ENCODE measurements at regions of chr9 and their contacts with region 1.

Region 1: DNA sequence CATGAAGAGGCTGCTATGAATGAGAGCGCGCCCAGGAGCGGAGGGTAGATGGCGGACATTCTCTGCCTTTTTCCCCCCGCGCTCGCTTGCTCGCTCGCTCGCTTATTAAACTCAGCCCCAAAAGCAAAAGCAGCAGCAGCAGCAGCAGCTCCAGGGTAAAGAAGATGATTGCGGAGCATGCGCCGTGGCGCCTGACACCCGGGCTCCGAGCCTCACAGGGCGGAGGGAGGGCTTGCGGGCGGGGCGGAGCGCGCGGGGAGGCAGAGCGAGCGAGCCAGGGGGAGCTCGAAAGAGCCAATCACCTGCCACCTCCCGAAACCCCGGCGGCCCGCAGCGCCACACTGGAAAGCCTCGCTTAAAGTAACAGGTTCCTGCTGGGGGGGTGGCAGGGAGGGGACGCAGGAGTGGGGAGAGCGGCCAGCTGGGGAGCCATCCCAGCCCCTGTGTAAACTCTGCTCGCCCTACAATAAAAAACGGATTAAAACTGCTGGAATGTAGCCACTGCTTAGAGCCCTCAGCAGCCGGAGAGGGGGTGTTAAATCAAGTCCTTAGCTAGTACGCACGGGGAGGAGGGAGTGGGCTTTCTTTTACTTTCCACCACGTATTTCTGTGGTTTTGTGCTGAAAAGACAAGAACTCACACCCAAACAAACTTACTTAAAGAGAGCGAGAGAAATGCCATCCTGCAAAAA is at the start of gene MLLT3:
- DNase-seq: peak; percentile 98
- ATAC-seq: peak; percentile 86
- H3K4me3 Mint-ChIP-seq: peak within 1 kb of the TSS; percentile 98
- H3K27ac Mint-ChIP-seq: peak within 1 kb of the TSS; percentile 99
- H3K4me1 Mint-ChIP-seq: peaks cover 36% of the 10 kb centered on the region
- H3K27me3 Mint-ChIP-seq: no peaks in the 10 kb centered on the region
- total RNA-seq, gene MLLT3: 42.5 to 49.2 TPM

Region 2: DNA sequence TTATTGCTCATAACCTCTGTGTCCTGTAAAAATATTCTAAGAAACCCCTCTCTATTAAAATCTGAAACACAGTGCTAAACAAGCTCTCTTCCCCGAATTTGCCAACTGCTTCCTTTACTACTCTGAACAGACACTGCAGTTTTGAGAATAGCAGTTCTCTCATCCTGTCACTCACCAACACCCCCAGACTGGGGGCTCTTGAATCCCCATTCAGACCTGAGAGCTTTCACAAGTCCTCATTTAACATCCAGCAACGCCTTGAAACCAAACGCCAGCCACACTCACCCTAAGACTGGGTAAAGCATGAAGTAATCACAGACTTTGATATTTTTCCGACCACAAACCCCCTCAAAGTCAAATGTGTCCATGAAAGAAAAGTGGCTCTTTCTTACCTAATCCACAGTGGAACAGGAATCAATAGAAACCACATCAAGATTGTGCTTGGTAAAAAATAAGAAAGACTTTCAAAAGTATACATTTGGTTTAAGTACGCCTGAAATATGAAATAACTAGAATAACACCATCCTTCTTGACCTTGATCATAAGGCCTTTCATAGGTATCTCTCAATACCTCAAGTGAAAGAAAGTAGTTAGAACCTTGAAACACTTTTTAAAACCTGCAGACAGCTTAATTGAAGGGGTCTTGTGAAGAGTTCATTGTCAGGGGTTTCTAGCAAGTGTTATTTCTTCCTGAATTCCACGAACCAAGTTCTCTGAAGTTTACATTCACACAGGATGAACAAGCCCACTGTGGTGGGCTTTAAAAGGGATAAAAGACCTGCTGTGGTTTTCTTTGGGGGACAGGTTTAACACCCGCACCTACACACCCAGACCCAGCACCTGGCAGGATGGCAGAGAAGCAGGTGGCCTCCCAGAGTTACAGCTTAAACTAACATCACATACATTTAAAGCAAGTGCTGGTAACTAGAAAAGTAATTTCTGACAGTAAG is 412.8 kb before region 1 on chr9:
- CTCF ChIA-PET with region 1: no interaction called
- POLR2A ChIA-PET with region 1: no interaction called
- intact Hi-C with region 1: loop called in 1 of 2 experiments (anchors 2 kb)
- DNase-seq: peak; percentile 77
- ATAC-seq: peak; percentile 79
- H3K4me3 Mint-ChIP-seq: peak overlapping the region; percentile 31
- H3K27ac Mint-ChIP-seq: peak overlapping the region; percentile 84
- H3K4me1 Mint-ChIP-seq: peaks cover 25% of the 10 kb centered on the region
- H3K27me3 Mint-ChIP-seq: no peaks in the 10 kb centered on the region

Region 3: GRCh38 chr9:20426019-20426418 is 196.5 kb before region 1 on chr9:
- CTCF ChIA-PET with region 1: no interaction called
- POLR2A ChIA-PET with region 1: interaction called, 4 read pairs
- intact Hi-C with region 1: loop called in 1 of 2 experiments (anchors 2 kb)
- DNase-seq: no peak
- ATAC-seq: no peak
- H3K4me3 Mint-ChIP-seq: no peak overlapping the region
- H3K27ac Mint-ChIP-seq: no peak overlapping the region
- H3K4me1 Mint-ChIP-seq: peaks cover 8% of the 10 kb centered on the region
- H3K27me3 Mint-ChIP-seq: no peaks in the 10 kb centered on the region

Region 4: GRCh38 chr9:20604562-20604961 is 17.9 kb before region 1 on chr9:
- CTCF ChIA-PET with region 1: interaction called, 9 read pairs
- POLR2A ChIA-PET with region 1: interaction called, 5 read pairs
- intact Hi-C with region 1: loop called (anchors 2 kb)
- DNase-seq: no peak
- ATAC-seq: peak; percentile 87
- H3K4me3 Mint-ChIP-seq: peak overlapping the region; percentile 56
- H3K27ac Mint-ChIP-seq: no peak overlapping the region
- H3K4me1 Mint-ChIP-seq: peaks cover 72% of the 10 kb centered on the region
- H3K27me3 Mint-ChIP-seq: no peaks in the 10 kb centered on the region

Region 5: DNA sequence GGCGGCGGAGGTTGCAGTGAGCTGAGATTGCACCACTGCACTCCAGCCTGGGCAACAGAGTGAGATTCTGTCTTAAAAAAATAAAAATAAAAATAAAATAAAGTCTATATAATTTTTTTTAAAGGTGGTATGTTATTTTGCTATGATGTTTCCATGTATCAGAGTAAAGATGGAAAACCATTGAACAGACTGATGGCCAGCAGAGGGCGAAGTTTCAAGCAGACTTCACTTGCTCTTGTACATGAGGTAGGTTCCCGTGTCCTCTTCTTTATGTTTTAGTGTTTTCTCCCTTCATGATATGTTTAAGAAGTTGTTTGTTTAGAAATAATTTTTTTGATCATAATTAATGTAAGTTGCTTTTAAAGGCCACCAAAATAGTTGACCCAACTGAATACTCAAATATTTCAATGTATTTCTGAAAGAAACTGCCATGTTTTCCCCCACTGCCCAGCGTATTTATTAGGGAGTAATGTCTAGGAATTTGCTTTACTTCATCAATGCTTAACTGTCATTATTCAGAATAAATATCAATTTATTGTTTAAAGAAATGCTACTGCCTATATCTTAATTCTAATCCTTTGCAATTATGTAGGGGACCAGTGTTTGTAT is 262.6 kb after region 1 on chr9:
- CTCF ChIA-PET with region 1: interaction called, 5 read pairs
- POLR2A ChIA-PET with region 1: no interaction called
- intact Hi-C with region 1: loop called (anchors 5 to 10 kb)
- DNase-seq: peak; percentile 78
- ATAC-seq: peak; percentile 58
- H3K4me3 Mint-ChIP-seq: no peak overlapping the region
- H3K27ac Mint-ChIP-seq: no peak overlapping the region
- H3K4me1 Mint-ChIP-seq: no peaks in the 10 kb centered on the region
- H3K27me3 Mint-ChIP-seq: no peaks in the 10 kb centered on the region

Region 6: GRCh38 chr9:21096172-21096900 is 473.9 kb after region 1 on chr9:
- CTCF ChIA-PET with region 1: interaction called, 3 read pairs
- POLR2A ChIA-PET with region 1: no interaction called
- intact Hi-C with region 1: loop called in 1 of 2 experiments (anchors 1 kb)
- DNase-seq: peak; percentile 64
- ATAC-seq: peak; percentile 95
- H3K4me3 Mint-ChIP-seq: peak overlapping the region; percentile 58
- H3K27ac Mint-ChIP-seq: peak overlapping the region; percentile 87
- H3K4me1 Mint-ChIP-seq: peaks cover 31% of the 10 kb centered on the region
- H3K27me3 Mint-ChIP-seq: no peaks in the 10 kb centered on the region